ENCODE measurements at regions of chr9 and their contacts with region 1.

Region 1: GRCh38 chr9:69527454-69527853 is 144.7 kb downstream of the APBA1 start:
- DNase-seq: no peak
- H3K4me3 ChIP-seq: no peak overlapping the region
- H3K27ac ChIP-seq: no peak overlapping the region
- H3K4me1 ChIP-seq: no peaks in the 10 kb centered on the region
- H3K27me3 ChIP-seq: no peaks in the 10 kb centered on the region
- CTCF ChIP-seq: no peak

Region 2: DNA sequence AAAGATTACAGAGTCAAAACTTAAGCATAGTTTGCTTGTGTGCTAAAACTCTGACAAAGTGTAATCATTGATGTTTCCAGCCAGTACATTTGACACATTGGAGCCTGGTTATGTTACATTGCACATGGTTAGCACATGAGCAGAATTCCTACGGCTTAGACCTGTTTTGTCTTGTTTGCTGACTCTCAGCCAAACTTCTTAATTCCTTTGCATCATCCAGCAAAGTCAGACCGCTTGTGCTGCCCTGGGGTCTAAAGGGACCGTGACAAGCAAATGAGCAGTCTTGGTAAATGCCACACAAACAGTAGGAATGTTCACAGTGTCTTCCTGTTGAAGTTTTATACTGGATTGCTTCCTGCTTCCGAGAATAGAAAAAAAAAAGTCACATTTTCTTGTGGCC is 274.4 kb before region 1 on chr9:
- CTCF ChIA-PET with region 1: no interaction called
- dilution Hi-C with region 1: no loop called
- in situ Hi-C with region 1: no loop called
- intact Hi-C with region 1: no loop called
- DNase-seq: peak; percentile 72
- H3K4me3 ChIP-seq: no peak overlapping the region
- H3K27ac ChIP-seq: no peak overlapping the region
- H3K4me1 ChIP-seq: peaks cover 12% of the 10 kb centered on the region
- H3K27me3 ChIP-seq: no peaks in the 10 kb centered on the region
- CTCF ChIP-seq: no peak

Region 3: GRCh38 chr9:69376651-69377050 is 150.8 kb before region 1 on chr9:
- CTCF ChIA-PET with region 1: no interaction called
- dilution Hi-C with region 1: no loop called
- in situ Hi-C with region 1: no loop called
- intact Hi-C with region 1: no loop called
- DNase-seq: peak; percentile 83
- H3K4me3 ChIP-seq: no peak overlapping the region
- H3K27ac ChIP-seq: no peak overlapping the region
- H3K4me1 ChIP-seq: peaks cover 46% of the 10 kb centered on the region
- H3K27me3 ChIP-seq: no peaks in the 10 kb centered on the region
- CTCF ChIP-seq: no peak

Region 4: DNA sequence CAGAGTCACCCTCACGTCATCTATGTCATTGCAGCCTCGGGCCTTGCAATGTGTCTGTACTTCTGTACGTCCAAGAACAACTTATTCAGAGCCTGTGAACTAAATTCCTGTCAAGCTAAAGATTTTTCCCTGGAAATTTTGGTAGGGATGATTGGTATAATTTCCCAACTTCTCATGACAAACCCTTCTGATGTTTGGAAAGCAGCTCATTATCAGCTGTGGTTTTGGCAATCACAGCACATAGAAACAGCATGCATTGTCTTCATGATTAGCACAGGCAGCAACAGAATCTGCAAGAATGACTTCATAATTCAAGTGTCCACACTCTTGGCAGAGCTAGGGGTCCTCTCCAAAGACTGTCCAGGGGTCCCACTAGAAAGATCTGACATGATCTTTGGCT is 95.2 kb after region 1 on chr9:
- CTCF ChIA-PET with region 1: no interaction called
- dilution Hi-C with region 1: loop called (anchors 5 kb)
- in situ Hi-C with region 1: no loop called
- intact Hi-C with region 1: no loop called
- DNase-seq: no peak
- H3K4me3 ChIP-seq: no peak overlapping the region
- H3K27ac ChIP-seq: no peak overlapping the region
- H3K4me1 ChIP-seq: no peaks in the 10 kb centered on the region
- H3K27me3 ChIP-seq: no peaks in the 10 kb centered on the region
- CTCF ChIP-seq: no peak

Measured in mammary epithelial cell (primary cell).